ENCODE measurements at regions of chr21 and their contacts with region 1.

Region 1: GRCh38 chr21:14737922-14738321 is 191.8 kb upstream of the SAMSN1 start:
- DNase-seq: peak in 3 of 4 experiments; percentile 39 to 88 (median 49)
- ATAC-seq: peak; percentile 79
- H3K4me3 ChIP-seq: no peak overlapping the region
- H3K27ac ChIP-seq: peak overlapping the region; percentile 64; the same call in 1 of the 3 replicates
- H3K4me1 ChIP-seq: peaks cover 0 to 42% of the 10 kb centered on the region in 2 experiments; a peak in 3 of 5 replicates
- H3K27me3 ChIP-seq: no peaks in the 10 kb centered on the region
- CTCF ChIP-seq: peak; percentile 45 to 76 (median 61)
- EP300 ChIP-seq: peak; percentile 44
- POLR2A ChIP-seq: no peak
- RAD21 ChIP-seq: peak; percentile 62 to 87

Region 2: GRCh38 chr21:14454016-14455009 is 283.6 kb before region 1 on chr21:
- CTCF ChIA-PET with region 1: no interaction called
- POLR2A ChIA-PET with region 1: no interaction called
- in situ Hi-C with region 1: no loop called
- intact Hi-C with region 1: loop called (anchors 5 kb)
- DNase-seq: peak; percentile 80 to 93 (median 83)
- ATAC-seq: peak; percentile 69
- H3K4me3 ChIP-seq: no peak overlapping the region
- H3K27ac ChIP-seq: peak overlapping the region; percentile 91
- H3K4me1 ChIP-seq: peaks cover 17 to 54% of the 10 kb centered on the region in 2 experiments
- H3K27me3 ChIP-seq: no peaks in the 10 kb centered on the region
- CTCF ChIP-seq: no peak
- EP300 ChIP-seq: peak; percentile 98
- POLR2A ChIP-seq: no peak
- RAD21 ChIP-seq: peak; percentile 3 to 15; a peak in 2 of 4 replicates

Region 3: DNA sequence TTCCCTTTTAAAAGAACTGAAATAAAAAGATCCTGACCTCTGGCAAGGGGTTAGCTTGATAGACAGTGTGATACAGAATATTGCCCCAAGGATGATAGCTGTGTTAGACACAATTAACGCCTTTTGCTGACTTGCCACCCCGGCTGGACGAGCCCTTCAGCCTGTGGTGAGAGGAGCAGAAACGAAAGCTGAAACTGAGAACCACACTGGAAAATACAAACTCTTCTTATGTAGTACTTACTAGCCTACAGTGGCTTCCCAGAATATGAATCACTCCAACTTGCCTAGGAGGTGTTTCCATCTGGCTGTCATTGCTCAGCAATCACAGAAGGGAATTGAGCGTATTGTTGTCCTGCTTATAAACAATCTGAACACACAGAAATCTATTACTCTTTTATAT is 214.7 kb before region 1 on chr21:
- CTCF ChIA-PET with region 1: no interaction called
- POLR2A ChIA-PET with region 1: interaction called, 4 read pairs
- in situ Hi-C with region 1: no loop called
- intact Hi-C with region 1: loop called (anchors 5 kb)
- DNase-seq: peak in 1 of 4 experiments; percentile 28
- ATAC-seq: no peak
- H3K4me3 ChIP-seq: no peak overlapping the region
- H3K27ac ChIP-seq: no peak overlapping the region
- H3K4me1 ChIP-seq: peaks cover 4 to 16% of the 10 kb centered on the region in 2 experiments; a peak in 4 of 5 replicates
- H3K27me3 ChIP-seq: no peaks in the 10 kb centered on the region
- CTCF ChIP-seq: no peak
- EP300 ChIP-seq: no peak
- POLR2A ChIP-seq: no peak
- RAD21 ChIP-seq: no peak

Region 4: GRCh38 chr21:14581902-14582457 is 155.9 kb before region 1 on chr21:
- CTCF ChIA-PET with region 1: no interaction called
- POLR2A ChIA-PET with region 1: no interaction called
- in situ Hi-C with region 1: no loop called
- intact Hi-C with region 1: loop called (anchors 5 kb)
- DNase-seq: peak in 2 of 4 experiments; percentile 36 to 80
- ATAC-seq: peak; percentile 66
- H3K4me3 ChIP-seq: peak overlapping the region; percentile 19
- H3K27ac ChIP-seq: peak overlapping the region; percentile 91
- H3K4me1 ChIP-seq: peaks cover 0 to 25% of the 10 kb centered on the region in 2 experiments; a peak in 3 of 5 replicates
- H3K27me3 ChIP-seq: no peaks in the 10 kb centered on the region
- CTCF ChIP-seq: no peak
- EP300 ChIP-seq: peak; percentile 95
- POLR2A ChIP-seq: peak; percentile 55
- RAD21 ChIP-seq: no peak; a peak in 1 of 4 replicates

Region 5: DNA sequence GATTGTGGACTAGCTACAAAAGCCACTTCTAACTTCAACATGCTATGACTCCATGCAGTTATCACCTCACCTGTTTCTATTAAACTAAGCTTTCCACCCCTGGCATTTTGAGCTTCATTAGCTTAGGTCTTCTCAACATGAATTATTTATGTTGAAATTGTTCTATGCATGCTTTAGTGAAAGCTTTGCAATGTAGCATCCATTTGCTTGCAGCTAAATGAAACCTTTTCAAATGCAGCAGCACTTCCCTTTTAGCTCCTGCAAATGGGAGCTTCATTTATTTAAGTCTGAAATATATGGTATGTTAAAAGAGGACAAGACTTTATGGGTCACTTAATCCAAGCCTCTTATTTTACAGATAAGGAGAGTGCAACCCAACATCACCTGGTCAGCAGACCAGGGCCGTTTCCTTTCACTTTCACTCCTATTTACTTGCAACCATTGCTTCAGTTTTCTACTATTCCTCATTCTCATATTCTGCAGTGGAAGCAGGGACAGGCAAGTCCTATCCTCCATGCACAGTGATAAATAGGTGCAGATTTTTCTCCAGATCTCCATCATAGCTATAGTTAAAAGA is 135.5 kb before region 1 on chr21:
- CTCF ChIA-PET with region 1: no interaction called
- POLR2A ChIA-PET with region 1: interaction called, 3 read pairs
- in situ Hi-C with region 1: no loop called
- intact Hi-C with region 1: loop called (anchors 5 kb)
- DNase-seq: peak in 1 of 4 experiments; percentile 32
- ATAC-seq: peak; percentile 46
- H3K4me3 ChIP-seq: no peak overlapping the region
- H3K27ac ChIP-seq: peak overlapping the region; percentile 39; the same call in 2 of the 3 replicates
- H3K4me1 ChIP-seq: peaks cover 7 to 41% of the 10 kb centered on the region in 2 experiments; a peak in 4 of 5 replicates
- H3K27me3 ChIP-seq: no peaks in the 10 kb centered on the region
- CTCF ChIP-seq: no peak
- EP300 ChIP-seq: no peak
- POLR2A ChIP-seq: no peak
- RAD21 ChIP-seq: no peak

Region 6: GRCh38 chr21:14675774-14676530 is 62.0 kb before region 1 on chr21:
- CTCF ChIA-PET with region 1: no interaction called
- POLR2A ChIA-PET with region 1: no interaction called
- in situ Hi-C with region 1: no loop called
- intact Hi-C with region 1: loop called (anchors 1 kb)
- DNase-seq: peak in 1 of 4 experiments; percentile 67
- ATAC-seq: peak; percentile 51
- H3K4me3 ChIP-seq: no peak overlapping the region
- H3K27ac ChIP-seq: peak overlapping the region; percentile 86
- H3K4me1 ChIP-seq: peaks cover 8 to 54% of the 10 kb centered on the region in 2 experiments
- H3K27me3 ChIP-seq: no peaks in the 10 kb centered on the region
- CTCF ChIP-seq: no peak
- EP300 ChIP-seq: peak; percentile 59
- POLR2A ChIP-seq: no peak
- RAD21 ChIP-seq: no peak

Region 7: DNA sequence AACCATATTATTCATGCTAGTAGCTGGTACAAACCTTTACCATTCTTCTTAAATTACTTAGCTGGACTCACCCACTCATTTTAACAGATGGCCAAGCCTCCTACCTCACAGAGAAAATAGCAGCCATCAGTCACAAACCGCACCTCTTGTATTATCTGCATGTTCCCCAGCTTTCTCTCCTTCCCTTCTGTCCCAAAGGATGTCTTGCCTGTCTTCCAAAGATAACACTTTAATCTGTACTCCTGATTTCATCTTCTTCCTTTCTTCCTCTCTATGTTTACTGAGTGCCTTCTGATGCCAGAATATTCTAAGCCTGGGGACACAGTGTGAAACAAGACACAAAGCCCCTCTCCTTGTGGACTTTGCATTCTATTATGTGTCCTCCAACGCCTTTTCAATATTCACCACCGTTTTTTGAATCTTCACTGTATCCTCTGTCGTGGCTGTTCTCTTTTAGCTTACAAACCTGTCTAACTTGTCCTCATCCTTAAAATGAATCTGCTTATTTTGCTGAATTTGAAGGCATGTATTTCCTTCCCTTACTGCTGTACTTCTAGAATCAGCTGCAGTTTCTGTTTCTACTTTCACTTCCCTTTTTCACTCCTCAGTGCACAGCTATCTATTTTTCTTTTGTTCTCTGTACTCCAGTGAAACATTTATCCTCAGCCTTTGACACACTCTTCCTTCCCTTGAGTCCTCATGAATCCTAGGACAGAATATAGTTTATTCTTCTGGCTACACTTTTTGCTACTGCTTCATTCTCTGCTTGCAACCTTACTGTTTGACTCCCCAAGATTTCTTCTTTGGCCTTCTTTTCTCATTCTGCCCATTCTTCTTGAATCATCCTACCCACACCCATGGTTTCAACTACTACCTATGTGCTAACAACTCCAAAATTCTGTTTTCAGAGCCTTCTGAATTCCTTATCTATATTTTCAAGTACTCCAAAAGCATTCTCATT is 25.1 kb after region 1 on chr21:
- CTCF ChIA-PET with region 1: no interaction called
- POLR2A ChIA-PET with region 1: no interaction called
- in situ Hi-C with region 1: no loop called
- intact Hi-C with region 1: no loop called
- DNase-seq: peak; percentile 51 to 92 (median 68)
- ATAC-seq: peak; percentile 75
- H3K4me3 ChIP-seq: peak overlapping the region; percentile 6; the same call in 1 of the 2 replicates
- H3K27ac ChIP-seq: peak overlapping the region; percentile 77
- H3K4me1 ChIP-seq: peaks cover 6 to 37% of the 10 kb centered on the region in 2 experiments; a peak in 4 of 5 replicates
- H3K27me3 ChIP-seq: no peaks in the 10 kb centered on the region
- CTCF ChIP-seq: no peak
- EP300 ChIP-seq: peak; percentile 99
- POLR2A ChIP-seq: peak; percentile 36; the same call in 1 of the 2 replicates
- RAD21 ChIP-seq: peak in 1 of 2 experiments; percentile 29; a peak in 2 of 4 replicates

Region 8: GRCh38 chr21:14773777-14774345 is 35.9 kb after region 1 on chr21:
- CTCF ChIA-PET with region 1: no interaction called
- POLR2A ChIA-PET with region 1: no interaction called
- in situ Hi-C with region 1: no loop called
- intact Hi-C with region 1: loop called (anchors 5 kb)
- DNase-seq: peak; percentile 68 to 90 (median 74)
- ATAC-seq: peak; percentile 95
- H3K4me3 ChIP-seq: no peak overlapping the region
- H3K27ac ChIP-seq: no peak overlapping the region; the same call in 2 of the 3 replicates
- H3K4me1 ChIP-seq: peaks cover 0 to 18% of the 10 kb centered on the region in 2 experiments; a peak in 3 of 5 replicates
- H3K27me3 ChIP-seq: no peaks in the 10 kb centered on the region
- CTCF ChIP-seq: peak; percentile 71 to 91 (median 79)
- EP300 ChIP-seq: 0 out of 2 replicates have a peak, but pooled peaks have one; percentile 47
- POLR2A ChIP-seq: no peak
- RAD21 ChIP-seq: peak; percentile 87 to 93

Measured in K562 (cell line).